PC-9 (cell line): ENCODE measurements at regions of chr2 and their contacts with region 1.

Region 1: GRCh38 chr2:168336864-168337263 is 89.5 kb upstream of the STK39 start:
- DNase-seq: peak; percentile 45 to 72
- H3K4me3 ChIP-seq: no peak overlapping the region
- H3K27ac ChIP-seq: no peak overlapping the region
- H3K4me1 ChIP-seq: no peaks in the 10 kb centered on the region
- H3K27me3 ChIP-seq: no peaks in the 10 kb centered on the region
- CTCF ChIP-seq: peak; percentile 61

Region 2: GRCh38 chr2:168136392-168136977 is 200.4 kb before region 1 on chr2:
- CTCF ChIA-PET with region 1: no interaction called
- POLR2A ChIA-PET with region 1: no interaction called
- intact Hi-C with region 1: loop called (anchors 2 kb)
- DNase-seq: no peak
- H3K4me3 ChIP-seq: no peak overlapping the region
- H3K27ac ChIP-seq: 0 out of 2 replicates have a peak overlapping the region, but pooled peaks have one; percentile 34
- H3K4me1 ChIP-seq: peaks cover 21% of the 10 kb centered on the region
- H3K27me3 ChIP-seq: no peaks in the 10 kb centered on the region
- CTCF ChIP-seq: peak; percentile 61

Region 3: GRCh38 chr2:168427451-168427850 is 90.6 kb after region 1 on chr2:
- CTCF ChIA-PET with region 1: no interaction called
- POLR2A ChIA-PET with region 1: no interaction called
- intact Hi-C with region 1: no loop called
- DNase-seq: no peak
- H3K4me3 ChIP-seq: no peak overlapping the region
- H3K27ac ChIP-seq: no peak overlapping the region
- H3K4me1 ChIP-seq: peaks cover 5% of the 10 kb centered on the region; the same call in 1 of the 2 replicates
- H3K27me3 ChIP-seq: no peaks in the 10 kb centered on the region
- CTCF ChIP-seq: no peak